Right ventricle myocardium superior (tissue), 1 donor: ENCODE measurements at regions of chr6 and their contacts with region 1.

Region 1: GRCh38 chr6:7238900-7239589 is 74.0 kb downstream of the SSR1 start:
- DNase-seq: peak; percentile 94
- ATAC-seq: peak; percentile 79

Region 2: GRCh38 chr6:6577736-6578135 is 661.3 kb before region 1 on chr6:
- intact Hi-C with region 1: loop called (anchors 10 kb)
- DNase-seq: no peak
- ATAC-seq: no peak

Region 3: GRCh38 chr6:6676910-6677441 is 562.1 kb before region 1 on chr6:
- intact Hi-C with region 1: loop called (anchors 5 kb)
- DNase-seq: peak; percentile 77
- ATAC-seq: peak; percentile 89

Region 4: DNA sequence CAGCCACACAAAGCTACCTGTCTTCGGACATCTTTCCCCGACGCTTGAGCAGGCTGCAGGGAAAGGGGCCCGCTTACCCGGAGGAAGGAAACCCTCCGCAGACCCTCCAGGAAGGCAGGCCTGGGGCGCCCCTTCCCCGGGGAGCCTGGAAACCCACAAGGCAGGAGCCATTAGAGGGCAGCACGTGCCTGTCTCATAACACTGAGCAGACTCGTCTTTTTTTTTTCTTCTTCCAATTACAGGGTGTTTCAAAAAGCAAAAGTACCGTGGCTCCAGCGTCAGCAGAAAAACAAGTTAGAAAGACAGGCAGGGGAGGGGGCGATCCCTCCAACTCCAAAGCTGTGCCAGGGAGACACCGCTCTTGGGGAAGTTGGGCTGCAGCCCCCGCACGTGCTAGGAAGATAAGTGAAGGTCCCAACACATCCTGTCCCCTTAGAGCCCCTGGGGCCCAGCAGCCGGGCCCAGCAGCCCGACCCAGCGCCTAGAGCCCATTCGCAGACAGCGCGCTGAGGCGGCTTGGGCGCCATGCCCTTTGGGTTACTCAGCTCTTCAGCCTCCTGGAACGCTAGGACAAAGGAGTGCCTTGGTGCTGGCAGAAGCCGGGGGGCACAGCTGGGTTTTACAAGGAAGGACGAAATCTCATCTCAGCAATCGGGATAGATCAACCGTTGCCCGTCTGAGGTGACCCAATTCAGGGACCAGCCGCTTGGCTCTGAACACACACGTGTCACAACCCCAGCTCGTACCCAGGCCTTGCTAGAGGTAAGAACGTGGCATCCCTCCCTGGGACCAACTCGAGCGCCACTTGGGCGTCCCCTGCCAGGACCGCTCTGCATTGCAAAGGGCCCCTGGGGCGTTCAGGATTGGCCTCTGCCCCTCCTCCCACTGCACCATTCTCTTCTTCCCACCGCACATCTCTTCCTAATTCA is 514.2 kb before region 1 on chr6:
- intact Hi-C with region 1: loop called (anchors 5 kb)
- DNase-seq: peak; percentile 86
- ATAC-seq: peak; percentile 95

Region 5: GRCh38 chr6:7107578-7108195 is 131.4 kb before region 1 on chr6 and contains the start of gene RREB1:
- intact Hi-C with region 1: loop called (anchors 10 kb)
- DNase-seq: peak; percentile 67
- ATAC-seq: peak; percentile 80
- total RNA-seq, gene RREB1: 34.2 TPM